ENCODE measurements at regions of chr4 and their contacts with region 1.

Region 1: DNA sequence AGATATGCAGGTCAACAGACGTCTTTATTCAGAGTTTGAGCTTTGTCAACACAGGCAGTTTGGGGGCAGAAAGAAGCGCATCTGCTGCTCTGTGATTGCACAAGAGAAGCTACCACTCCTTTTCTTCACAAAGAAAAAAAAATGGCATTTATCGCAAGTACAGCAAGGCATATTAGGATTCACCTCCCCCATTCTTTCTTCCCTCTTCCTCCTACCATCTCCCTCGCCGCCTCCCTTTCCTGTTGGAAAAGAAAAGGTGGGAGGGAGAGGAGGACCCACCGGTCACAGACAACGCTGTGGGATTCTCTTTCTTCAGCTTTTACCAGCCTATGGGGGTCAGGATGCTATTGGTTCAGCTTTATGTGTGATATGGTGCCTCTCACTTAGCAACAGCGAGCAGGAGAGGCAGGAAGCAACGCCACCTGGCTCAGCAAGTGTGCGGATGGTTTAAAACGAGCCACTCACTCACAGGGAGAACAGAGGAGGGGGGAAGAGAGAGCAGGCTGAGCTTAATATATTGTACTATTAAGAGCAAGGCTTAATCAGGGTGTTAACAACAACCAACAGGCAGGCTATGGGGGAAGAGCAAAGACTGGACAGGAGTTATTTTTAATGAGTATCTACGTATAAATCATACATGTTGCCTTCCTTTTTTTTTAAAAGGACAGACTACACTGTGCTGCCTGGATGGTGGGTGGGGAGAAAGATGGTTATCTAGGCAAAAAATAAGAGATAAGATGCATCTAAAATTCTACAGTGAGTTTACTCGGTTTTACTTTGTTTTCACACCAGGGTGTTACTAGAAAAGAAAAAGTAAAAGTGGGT is 104.7 kb downstream of the MAML3 start:
- DNase-seq: peak; percentile 62
- H3K4me3 ChIP-seq: peak overlapping the region; percentile 46 to 59
- H3K27ac ChIP-seq: peak overlapping the region; percentile 71 to 100
- H3K4me1 ChIP-seq: peaks cover 9 to 46% of the 10 kb centered on the region in 2 experiments; a peak in 3 of 4 replicates
- H3K27me3 ChIP-seq: no peaks in the 10 kb centered on the region
- CTCF ChIP-seq: 0 out of 2 replicates have a peak, but pooled peaks have one; percentile 17
- EP300 ChIP-seq: peak in 1 of 2 experiments; percentile 77; a peak in 1 of 4 replicates
- RAD21 ChIP-seq: peak; percentile 67

Region 2: GRCh38 chr4:139153420-139154133 is 895.7 kb before region 1 on chr4:
- CTCF ChIA-PET with region 1: no interaction called
- POLR2A ChIA-PET with region 1: no interaction called
- DNase-seq: no peak
- H3K4me3 ChIP-seq: no peak overlapping the region
- H3K27ac ChIP-seq: no peak overlapping the region
- H3K4me1 ChIP-seq: no peaks in the 10 kb centered on the region
- H3K27me3 ChIP-seq: no peaks in the 10 kb centered on the region
- CTCF ChIP-seq: no peak
- EP300 ChIP-seq: no peak
- RAD21 ChIP-seq: no peak

Region 3: GRCh38 chr4:139734875-139735380 is 314.3 kb before region 1 on chr4:
- CTCF ChIA-PET with region 1: interaction called, 13 read pairs
- POLR2A ChIA-PET with region 1: interaction called, 12 read pairs
- DNase-seq: peak; percentile 97
- H3K4me3 ChIP-seq: peak overlapping the region; percentile 39 to 58; a peak in 3 of 4 replicates
- H3K27ac ChIP-seq: peak overlapping the region; percentile 43 to 99
- H3K4me1 ChIP-seq: peaks cover 6 to 46% of the 10 kb centered on the region in 2 experiments; a peak in 3 of 4 replicates
- H3K27me3 ChIP-seq: no peaks in the 10 kb centered on the region
- CTCF ChIP-seq: peak; percentile 77
- EP300 ChIP-seq: peak in 1 of 2 experiments; percentile 97; a peak in 2 of 4 replicates
- RAD21 ChIP-seq: peak; percentile 82

Region 4: DNA sequence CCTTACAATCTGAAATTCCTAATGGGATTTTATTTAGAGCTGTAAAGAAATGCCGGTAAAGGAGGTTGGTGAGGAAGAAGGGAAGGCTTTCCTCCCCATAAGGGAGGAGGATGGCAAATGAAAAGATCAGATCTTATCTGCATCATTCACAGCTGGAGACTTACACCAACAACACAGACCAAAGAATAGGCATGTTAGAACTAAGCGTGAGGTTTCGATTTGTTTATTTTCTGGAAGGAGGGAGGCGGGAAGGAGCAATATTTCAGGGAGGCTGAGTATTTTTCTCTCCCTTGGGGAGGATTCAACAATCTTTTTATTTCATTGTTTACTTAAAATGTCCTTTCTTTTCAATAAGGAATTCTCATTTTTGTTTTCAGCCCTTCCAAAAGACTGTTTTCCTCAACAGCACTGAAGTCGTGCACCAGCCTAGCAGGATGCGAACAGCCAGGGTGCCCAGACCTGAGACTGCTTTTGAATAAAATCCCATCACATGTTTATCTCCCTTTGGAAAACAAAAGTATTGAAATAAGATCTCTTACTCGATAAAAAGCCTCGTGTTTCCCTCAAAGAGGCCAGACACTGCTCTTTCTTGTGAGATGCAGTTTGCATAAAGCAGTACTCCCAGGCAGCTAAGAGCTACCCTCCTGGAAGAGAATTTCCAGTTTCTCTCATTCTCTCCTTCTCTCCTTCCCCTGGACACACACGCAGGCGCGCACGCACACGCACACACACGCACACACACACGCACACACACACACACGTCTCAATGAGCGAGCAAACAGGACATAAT is 147.5 kb before region 1 on chr4:
- CTCF ChIA-PET with region 1: no interaction called
- POLR2A ChIA-PET with region 1: interaction called, 11 read pairs
- DNase-seq: peak; percentile 46
- H3K4me3 ChIP-seq: peak overlapping the region in 1 of 2 experiments; percentile 36
- H3K27ac ChIP-seq: peak overlapping the region; percentile 36 to 94; a peak in 3 of 4 replicates
- H3K4me1 ChIP-seq: peaks cover 0 to 43% of the 10 kb centered on the region in 2 experiments; a peak in 2 of 4 replicates
- H3K27me3 ChIP-seq: no peaks in the 10 kb centered on the region
- CTCF ChIP-seq: no peak
- EP300 ChIP-seq: no peak
- RAD21 ChIP-seq: peak; percentile 12; the same call in 1 of the 2 replicates

Region 5: GRCh38 chr4:139950568-139950967 is 98.7 kb before region 1 on chr4:
- CTCF ChIA-PET with region 1: interaction called, 14 read pairs
- POLR2A ChIA-PET with region 1: interaction called, 10 read pairs
- DNase-seq: no peak
- H3K4me3 ChIP-seq: no peak overlapping the region
- H3K27ac ChIP-seq: no peak overlapping the region; a peak in 1 of 4 replicates
- H3K4me1 ChIP-seq: peaks cover 0 to 14% of the 10 kb centered on the region in 2 experiments; a peak in 3 of 4 replicates
- H3K27me3 ChIP-seq: no peaks in the 10 kb centered on the region
- CTCF ChIP-seq: no peak
- EP300 ChIP-seq: no peak
- RAD21 ChIP-seq: no peak

Region 6: DNA sequence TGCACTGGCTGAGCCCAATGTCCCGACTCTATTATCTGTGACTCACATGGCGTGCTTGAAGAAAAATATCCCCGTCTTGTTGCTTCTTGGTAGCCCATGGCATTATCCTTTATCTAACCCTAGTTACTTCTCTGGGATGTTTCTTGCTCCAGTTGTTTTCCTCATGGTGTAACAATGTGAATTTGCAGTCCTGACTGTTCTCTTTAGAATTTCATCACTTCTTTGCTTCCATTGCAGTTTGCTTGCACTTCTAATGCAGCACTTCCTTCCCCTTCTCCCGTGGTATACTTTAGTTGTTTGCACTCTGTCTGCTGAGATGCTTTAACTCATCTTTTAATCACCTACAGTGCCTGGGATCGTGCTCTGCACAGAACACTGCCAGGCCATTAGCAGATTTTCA is 22.1 kb before region 1 on chr4:
- CTCF ChIA-PET with region 1: no interaction called
- POLR2A ChIA-PET with region 1: no interaction called
- DNase-seq: no peak
- H3K4me3 ChIP-seq: no peak overlapping the region
- H3K27ac ChIP-seq: peak overlapping the region in 1 of 2 experiments; percentile 82; a peak in 2 of 4 replicates
- H3K4me1 ChIP-seq: peaks cover 0 to 49% of the 10 kb centered on the region in 2 experiments; a peak in 2 of 4 replicates
- H3K27me3 ChIP-seq: no peaks in the 10 kb centered on the region
- CTCF ChIP-seq: no peak
- EP300 ChIP-seq: no peak
- RAD21 ChIP-seq: no peak

Region 7: DNA sequence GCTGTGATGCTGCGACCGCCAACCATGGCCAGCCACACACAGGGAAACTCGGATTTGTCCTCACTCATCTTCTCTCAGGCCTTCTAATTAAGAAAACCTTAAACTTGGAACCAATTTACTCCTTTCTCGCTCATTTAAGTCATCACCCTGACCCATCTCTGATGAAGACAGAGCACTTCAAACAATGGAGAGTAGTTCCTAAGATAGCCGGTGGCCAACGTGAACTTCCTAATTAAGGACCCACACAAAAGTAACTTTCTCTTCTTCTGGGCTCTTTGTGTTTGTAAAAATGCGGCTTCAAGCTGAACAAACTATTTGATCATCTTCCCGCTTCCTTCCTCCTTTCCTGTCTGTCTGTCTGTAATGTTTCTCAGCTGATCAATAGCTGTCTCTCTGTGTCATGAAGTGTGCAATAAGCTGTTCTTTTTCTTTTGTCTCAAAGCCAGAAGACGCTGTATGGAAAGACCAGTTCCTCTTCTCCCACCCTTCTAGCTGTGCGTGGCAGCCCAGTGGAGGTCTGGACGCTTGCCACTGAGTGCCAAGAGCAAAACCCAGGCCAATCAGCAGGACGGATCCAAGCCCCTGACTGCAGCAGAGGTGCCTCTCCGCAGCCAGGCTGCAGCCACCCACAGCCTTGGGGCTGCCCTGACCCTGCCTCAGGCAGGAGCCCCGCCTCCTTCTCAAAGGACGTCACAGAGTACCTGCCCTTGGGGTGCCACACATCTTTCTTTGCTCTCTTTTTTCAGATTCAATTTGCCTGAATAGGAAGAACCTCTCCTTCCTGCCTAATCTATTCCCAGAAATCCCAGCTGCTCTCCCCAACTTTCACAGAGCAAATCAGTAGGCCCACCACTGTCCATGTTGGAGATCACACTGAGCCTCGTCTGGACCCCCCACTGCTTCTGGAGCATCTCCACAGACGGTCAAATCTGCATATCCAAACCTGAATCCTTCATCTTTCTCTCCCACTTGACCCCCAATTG is 45.5 kb after region 1 on chr4:
- CTCF ChIA-PET with region 1: interaction called, 11 read pairs
- POLR2A ChIA-PET with region 1: interaction called, 4 read pairs
- DNase-seq: peak; percentile 65
- H3K4me3 ChIP-seq: peak overlapping the region in 1 of 2 experiments; percentile 25; a peak in 2 of 4 replicates
- H3K27ac ChIP-seq: peak overlapping the region; percentile 97
- H3K4me1 ChIP-seq: peaks cover 66 to 67% of the 10 kb centered on the region in 2 experiments
- H3K27me3 ChIP-seq: no peaks in the 10 kb centered on the region
- CTCF ChIP-seq: no peak
- EP300 ChIP-seq: no peak
- RAD21 ChIP-seq: no peak

Region 8: DNA sequence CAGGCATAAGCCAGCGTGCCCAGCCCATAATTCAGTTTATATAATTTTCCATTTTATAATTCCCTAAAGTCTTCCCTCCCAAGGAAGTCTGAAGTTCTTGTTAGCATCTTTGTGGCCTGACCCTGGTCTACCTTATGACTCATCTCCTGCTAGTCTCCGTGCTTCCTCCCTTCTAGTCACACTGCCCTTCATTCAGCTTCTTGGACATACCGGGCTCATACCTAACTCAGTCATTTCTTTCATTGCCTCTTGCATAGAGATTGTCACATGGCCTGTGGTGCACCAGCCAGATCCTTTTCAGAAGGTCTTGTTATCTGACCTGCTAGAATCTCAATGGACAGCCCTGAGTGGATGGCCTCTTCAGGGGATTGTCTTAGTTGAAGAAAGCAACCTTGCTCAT is 127.5 kb after region 1 on chr4:
- CTCF ChIA-PET with region 1: no interaction called
- POLR2A ChIA-PET with region 1: no interaction called
- DNase-seq: no peak
- H3K4me3 ChIP-seq: no peak overlapping the region
- H3K27ac ChIP-seq: no peak overlapping the region
- H3K4me1 ChIP-seq: no peaks in the 10 kb centered on the region; a peak in 1 of 4 replicates
- H3K27me3 ChIP-seq: no peaks in the 10 kb centered on the region
- CTCF ChIP-seq: no peak
- EP300 ChIP-seq: no peak
- RAD21 ChIP-seq: no peak

Region 9: DNA sequence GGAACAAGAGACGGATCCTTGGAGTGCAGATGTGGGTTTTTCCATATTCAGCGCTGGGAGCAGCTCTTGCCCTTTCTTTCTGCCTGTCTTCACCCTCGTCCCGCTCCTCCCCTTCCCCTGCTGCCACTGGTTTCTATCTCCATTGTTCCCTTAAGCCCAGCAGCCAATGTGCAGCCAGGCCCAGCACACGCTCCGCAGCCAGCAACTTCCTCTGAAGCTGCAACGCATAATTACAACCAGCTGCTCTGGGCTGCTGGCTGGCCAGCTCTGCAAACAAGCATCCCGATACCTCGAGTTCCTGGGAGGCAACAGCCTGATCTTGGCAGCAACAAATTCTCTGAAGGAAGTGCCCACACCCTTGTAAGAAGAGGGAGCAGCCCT is 188.4 kb after region 1 on chr4:
- CTCF ChIA-PET with region 1: interaction called, 9 read pairs
- POLR2A ChIA-PET with region 1: interaction called, 10 read pairs
- DNase-seq: peak; percentile 88
- H3K4me3 ChIP-seq: peak overlapping the region; percentile 29 to 31; a peak in 3 of 4 replicates
- H3K27ac ChIP-seq: peak overlapping the region; percentile 84 to 100
- H3K4me1 ChIP-seq: peaks cover 34 to 45% of the 10 kb centered on the region in 2 experiments
- H3K27me3 ChIP-seq: no peaks in the 10 kb centered on the region
- CTCF ChIP-seq: no peak
- EP300 ChIP-seq: peak; percentile 54 to 86; a peak in 3 of 4 replicates
- RAD21 ChIP-seq: peak; percentile 31

Region 10: DNA sequence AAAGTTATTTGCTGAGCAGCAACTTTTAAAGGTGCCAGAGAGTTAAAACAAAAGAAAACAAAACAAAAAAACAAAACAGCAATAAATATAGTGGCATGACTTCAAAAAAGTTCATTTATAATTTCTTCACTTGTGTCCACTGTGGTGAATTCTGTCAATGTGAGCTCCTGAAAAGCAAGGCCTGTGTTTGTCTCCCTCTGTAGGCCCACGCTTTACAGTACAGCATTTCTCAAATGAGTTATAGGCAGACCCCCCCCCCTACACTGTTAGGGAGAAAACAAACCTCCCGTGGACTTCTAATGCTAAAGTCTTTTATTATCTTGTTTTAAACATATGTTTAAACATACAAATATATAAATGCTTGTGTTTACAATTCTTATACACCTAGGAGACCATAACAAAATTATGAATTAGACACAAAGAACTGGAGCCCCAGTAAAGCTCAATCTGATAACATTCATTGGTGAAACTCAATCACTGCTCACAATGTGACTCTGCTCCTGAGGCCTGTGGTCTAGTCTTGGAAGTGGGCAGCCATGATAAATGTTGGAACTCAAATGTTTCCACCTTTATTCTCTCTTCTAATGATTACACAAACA is 277.3 kb after region 1 on chr4:
- CTCF ChIA-PET with region 1: interaction called, 10 read pairs
- POLR2A ChIA-PET with region 1: no interaction called
- DNase-seq: peak; percentile 54
- H3K4me3 ChIP-seq: peak overlapping the region in 1 of 2 experiments; percentile 26; a peak in 1 of 4 replicates
- H3K27ac ChIP-seq: no peak overlapping the region
- H3K4me1 ChIP-seq: no peaks in the 10 kb centered on the region; a peak in 1 of 4 replicates
- H3K27me3 ChIP-seq: no peaks in the 10 kb centered on the region
- CTCF ChIP-seq: peak; percentile 88
- EP300 ChIP-seq: no peak
- RAD21 ChIP-seq: peak; percentile 85